ENCODE measurements at regions of chr1 and their contacts with region 1.

Region 1: DNA sequence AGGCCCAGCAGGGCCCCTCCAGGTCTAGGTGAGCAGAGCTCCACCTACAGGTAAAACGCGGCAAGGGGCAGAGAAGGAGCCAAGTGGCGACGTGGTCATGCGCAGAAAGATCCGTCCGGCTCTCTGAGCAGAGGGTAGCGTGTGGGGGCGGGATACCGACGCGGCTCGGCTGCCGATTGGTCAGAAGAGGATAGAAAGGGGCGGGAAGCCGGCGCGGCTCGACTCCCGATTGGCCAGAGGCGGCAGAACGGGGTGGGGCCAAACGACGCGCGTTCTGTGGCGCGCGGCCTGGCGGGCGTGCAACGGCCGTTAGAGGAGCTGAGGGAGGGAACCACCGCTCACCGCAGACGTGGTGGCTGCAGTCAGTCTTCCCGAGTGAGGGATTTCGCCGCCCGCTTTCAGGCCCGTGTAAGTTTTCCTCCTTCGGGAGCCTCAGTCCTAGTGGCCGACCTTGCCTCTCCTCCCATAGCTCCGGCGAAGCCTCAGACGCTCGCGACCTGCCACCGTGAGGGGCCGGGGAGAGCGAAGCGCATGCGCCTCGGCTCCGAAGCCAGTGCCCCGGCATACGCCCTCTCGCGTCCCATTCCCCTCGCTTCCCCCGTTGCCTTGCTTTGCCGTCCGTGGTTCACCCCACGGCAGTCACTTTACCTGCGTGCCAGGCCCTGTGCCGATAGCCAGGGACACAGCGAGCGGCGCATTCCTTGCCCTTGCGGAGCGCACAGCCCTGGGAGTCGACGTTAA is at the start of gene CEP85:
- DNase-seq: peak; percentile 93 to 99 (median 98)
- ATAC-seq: peak; percentile 96
- H3K4me3 ChIP-seq: peak within 1 kb of the TSS; percentile 91
- H3K4me3 Mint-ChIP-seq: peak within 1 kb of the TSS; percentile 89 to 99 (median 99)
- H3K27ac ChIP-seq: peak within 1 kb of the TSS; percentile 93
- H3K27ac Mint-ChIP-seq: peak within 1 kb of the TSS; percentile 87 to 99 (median 96)
- H3K4me1 ChIP-seq: peaks cover 4 to 13% of the 10 kb centered on the region in 2 donors
- H3K4me1 Mint-ChIP-seq: peaks cover 26 to 39% (median 38%) of the 10 kb centered on the region in 7 donors
- H3K27me3 ChIP-seq: no peaks in the 10 kb centered on the region
- H3K27me3 Mint-ChIP-seq: peaks cover 0 to 8% (median 0%) of the 10 kb centered on the region in 5 donors
- total RNA-seq, gene CEP85: 12.1 to 34.8 (median 20.7) TPM

Region 2: GRCh38 chr1:25568090-25568833 is 665.8 kb before region 1 on chr1:
- CTCF ChIA-PET with region 1: no interaction called
- POLR2A ChIA-PET with region 1: no interaction called
- intact Hi-C with region 1: no loop called
- DNase-seq: no peak
- ATAC-seq: no peak
- H3K4me3 ChIP-seq: no peak overlapping the region
- H3K4me3 Mint-ChIP-seq: peak overlapping the region in 9 of 10 donors; percentile 36 to 99 (median 74)
- H3K27ac ChIP-seq: peak overlapping the region; percentile 83
- H3K27ac Mint-ChIP-seq: peak overlapping the region in 8 of 9 donors; percentile 88 to 98 (median 94)
- H3K4me1 ChIP-seq: peaks cover 34 to 47% of the 10 kb centered on the region in 2 donors
- H3K4me1 Mint-ChIP-seq: peaks cover 34 to 83% (median 74%) of the 10 kb centered on the region in 7 donors
- H3K27me3 ChIP-seq: no peaks in the 10 kb centered on the region
- H3K27me3 Mint-ChIP-seq: no peaks in the 10 kb centered on the region

Region 3: GRCh38 chr1:26035959-26036755 is 197.9 kb before region 1 on chr1:
- CTCF ChIA-PET with region 1: interaction called, 4 read pairs
- POLR2A ChIA-PET with region 1: no interaction called
- intact Hi-C with region 1: loop called (anchors 1 to 10 kb)
- DNase-seq: peak; percentile 53 to 89 (median 73)
- ATAC-seq: peak; percentile 87
- H3K4me3 ChIP-seq: peak overlapping the region; percentile 99
- H3K4me3 Mint-ChIP-seq: peak overlapping the region; percentile 93 to 97 (median 96)
- H3K27ac ChIP-seq: peak overlapping the region; percentile 87
- H3K27ac Mint-ChIP-seq: peak overlapping the region; percentile 74 to 96 (median 90)
- H3K4me1 ChIP-seq: peaks cover 5 to 6% of the 10 kb centered on the region in 2 donors
- H3K4me1 Mint-ChIP-seq: peaks cover 0 to 15% (median 8%) of the 10 kb centered on the region in 7 donors
- H3K27me3 ChIP-seq: no peaks in the 10 kb centered on the region
- H3K27me3 Mint-ChIP-seq: peaks cover 0 to 19% (median 0%) of the 10 kb centered on the region in 5 donors

Region 4: DNA sequence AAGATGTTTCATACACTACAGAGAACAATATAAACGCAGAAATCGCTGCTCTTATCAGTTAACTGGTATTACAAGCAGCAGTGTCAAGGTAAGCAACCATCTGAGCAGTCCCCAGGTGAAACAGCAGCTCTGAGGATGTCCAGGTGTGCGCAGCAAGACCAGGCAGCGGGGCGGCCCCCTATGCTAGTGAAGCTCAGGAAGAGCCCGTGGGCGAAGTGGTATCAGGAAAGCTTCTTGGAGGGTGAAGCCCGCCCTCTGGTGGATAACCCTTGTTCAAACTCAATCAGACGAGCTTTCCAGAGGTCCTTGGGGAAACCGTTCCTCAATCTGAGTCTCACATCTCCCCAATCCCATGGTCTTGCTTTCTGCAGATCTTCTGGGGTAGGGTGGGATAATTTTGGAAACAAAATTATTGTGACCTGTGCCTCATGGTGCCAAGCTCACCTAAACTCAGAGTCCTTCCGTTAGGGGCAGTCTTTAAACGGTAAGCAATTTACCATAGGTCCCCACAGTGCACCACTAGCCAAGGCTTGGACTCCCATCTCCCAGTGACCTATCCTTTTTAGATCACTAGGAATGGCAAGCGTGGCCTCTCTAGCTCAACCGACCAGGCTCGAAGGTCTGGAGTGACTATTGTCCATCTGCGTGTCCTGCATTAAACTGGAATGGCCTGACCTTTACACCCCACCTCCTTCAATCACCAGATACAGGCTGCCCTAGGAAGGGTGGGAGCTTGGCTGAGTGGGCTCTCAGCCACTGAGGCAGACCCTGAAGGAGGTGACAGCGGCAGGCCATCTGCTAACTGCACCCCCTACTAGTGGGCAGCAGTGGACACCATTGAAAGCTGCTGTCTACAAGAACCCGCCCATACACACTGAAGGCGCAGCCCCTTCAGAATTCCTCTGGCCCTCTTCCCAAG is 88.8 kb before region 1 on chr1:
- CTCF ChIA-PET with region 1: interaction called, 19 read pairs
- POLR2A ChIA-PET with region 1: no interaction called
- intact Hi-C with region 1: no loop called
- DNase-seq: peak; percentile 52 to 77 (median 72)
- ATAC-seq: peak; percentile 99
- H3K4me3 ChIP-seq: no peak overlapping the region
- H3K4me3 Mint-ChIP-seq: peak overlapping the region in 5 of 10 donors; percentile 15 to 66 (median 37)
- H3K27ac ChIP-seq: no peak overlapping the region
- H3K27ac Mint-ChIP-seq: peak overlapping the region in 1 of 9 donors; percentile 19
- H3K4me1 ChIP-seq: no peaks in the 10 kb centered on the region
- H3K4me1 Mint-ChIP-seq: peaks cover 0 to 8% (median 4%) of the 10 kb centered on the region in 7 donors
- H3K27me3 ChIP-seq: no peaks in the 10 kb centered on the region
- H3K27me3 Mint-ChIP-seq: peaks cover 0 to 32% (median 0%) of the 10 kb centered on the region in 5 donors

Region 5: DNA sequence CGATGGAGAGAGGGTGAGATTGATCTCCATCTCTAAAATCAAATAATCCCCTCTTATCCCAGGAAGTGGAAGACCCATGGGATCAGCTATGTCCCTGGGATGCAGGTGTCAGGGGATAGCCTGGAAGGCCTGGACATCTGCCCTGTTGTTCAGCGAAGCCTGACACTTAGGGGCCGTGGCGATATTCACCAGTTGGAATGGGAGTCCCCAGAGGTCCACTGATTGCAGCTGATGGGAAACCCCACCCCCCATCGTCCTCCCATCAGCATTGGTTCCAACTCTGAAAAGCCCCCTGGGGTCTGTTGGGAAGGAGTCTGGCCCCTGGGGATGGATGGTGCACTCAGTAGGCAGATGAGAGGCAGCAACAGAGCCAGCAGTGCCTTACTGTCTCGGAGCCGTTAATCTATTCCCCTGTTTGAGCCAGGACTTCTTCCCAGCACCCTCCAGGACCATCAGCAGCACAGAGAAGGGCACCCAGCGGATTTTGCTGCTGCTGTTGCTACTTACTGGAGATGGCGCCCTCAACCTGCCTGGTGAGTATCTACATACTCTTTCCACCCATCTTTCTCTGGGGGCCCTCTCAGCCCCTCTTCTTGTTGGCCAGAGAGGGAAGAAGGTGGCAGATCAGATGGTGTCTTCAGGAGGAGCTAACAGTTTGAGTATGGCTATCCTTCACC is 30.3 kb before region 1 on chr1:
- CTCF ChIA-PET with region 1: interaction called, 5 read pairs
- POLR2A ChIA-PET with region 1: interaction called, 11 read pairs
- intact Hi-C with region 1: loop called in 1 of 2 experiments (anchors 2 kb)
- DNase-seq: no peak
- ATAC-seq: no peak
- H3K4me3 ChIP-seq: no peak overlapping the region
- H3K4me3 Mint-ChIP-seq: peak overlapping the region in 1 of 10 donors; percentile 90
- H3K27ac ChIP-seq: no peak overlapping the region
- H3K27ac Mint-ChIP-seq: peak overlapping the region in 7 of 9 donors; percentile 75 to 98 (median 89)
- H3K4me1 ChIP-seq: peaks cover 8 to 28% of the 10 kb centered on the region in 2 donors
- H3K4me1 Mint-ChIP-seq: peaks cover 21 to 54% (median 39%) of the 10 kb centered on the region in 7 donors
- H3K27me3 ChIP-seq: no peaks in the 10 kb centered on the region
- H3K27me3 Mint-ChIP-seq: peaks cover 0 to 2% (median 0%) of the 10 kb centered on the region in 5 donors

Region 6: GRCh38 chr1:26321315-26322041 is 87.4 kb after region 1 on chr1:
- CTCF ChIA-PET with region 1: interaction called, 4 read pairs
- POLR2A ChIA-PET with region 1: interaction called, 45 read pairs
- intact Hi-C with region 1: loop called in 1 of 2 experiments (anchors 1 kb)
- DNase-seq: peak; percentile 85 to 98 (median 92)
- ATAC-seq: peak; percentile 93
- H3K4me3 ChIP-seq: peak overlapping the region; percentile 98
- H3K4me3 Mint-ChIP-seq: peak overlapping the region; percentile 79 to 99 (median 94)
- H3K27ac ChIP-seq: peak overlapping the region; percentile 77
- H3K27ac Mint-ChIP-seq: peak overlapping the region; percentile 87 to 99 (median 96)
- H3K4me1 ChIP-seq: peaks cover 42 to 45% of the 10 kb centered on the region in 2 donors
- H3K4me1 Mint-ChIP-seq: peaks cover 40 to 70% (median 48%) of the 10 kb centered on the region in 7 donors
- H3K27me3 ChIP-seq: no peaks in the 10 kb centered on the region
- H3K27me3 Mint-ChIP-seq: no peaks in the 10 kb centered on the region

Region 7: DNA sequence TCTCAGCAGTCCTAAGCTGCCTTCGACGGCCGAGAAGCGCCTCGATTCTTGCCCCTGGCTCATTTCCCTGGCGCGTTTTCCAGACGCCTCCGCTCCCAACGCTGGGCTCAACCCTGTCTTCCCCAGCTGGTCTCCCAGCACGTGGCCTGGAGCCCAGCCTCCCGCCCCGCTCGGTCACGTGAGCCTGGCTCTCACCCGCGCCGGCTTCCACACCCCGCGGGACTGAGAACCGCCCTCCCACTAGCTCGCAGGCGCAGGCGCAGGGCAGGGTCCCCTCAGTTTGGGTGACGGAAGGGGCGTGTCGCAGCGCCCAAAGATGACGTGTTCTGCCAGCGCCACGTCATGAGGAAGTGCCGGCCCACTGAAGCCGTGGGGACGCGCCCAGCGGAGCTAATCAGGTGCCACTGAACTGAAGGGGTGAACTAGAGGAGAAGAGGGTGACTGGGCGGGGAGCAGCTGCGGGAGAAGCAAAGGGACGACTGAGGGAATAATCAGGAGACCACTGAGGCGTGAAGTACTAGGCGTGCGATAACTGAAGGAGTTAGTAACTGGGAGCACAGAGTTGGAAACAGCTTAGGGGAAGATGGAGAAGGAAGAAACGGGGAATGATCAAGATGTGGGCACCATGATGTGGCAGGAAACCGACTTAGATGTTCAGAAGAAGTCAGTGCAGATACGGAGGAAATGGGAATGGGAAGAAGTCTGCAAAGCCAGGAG is 198.1 kb after region 1 on chr1 and contains the start of gene DHDDS:
- CTCF ChIA-PET with region 1: no interaction called
- POLR2A ChIA-PET with region 1: interaction called, 6 read pairs
- intact Hi-C with region 1: loop called in 1 of 2 experiments (anchors 1 kb)
- DNase-seq: peak; percentile 95 to 98 (median 97)
- ATAC-seq: peak; percentile 99
- H3K4me3 ChIP-seq: peak within 1 kb of the TSS; percentile 88
- H3K4me3 Mint-ChIP-seq: peak within 1 kb of the TSS; percentile 92 to 99 (median 96)
- H3K27ac ChIP-seq: peak within 1 kb of the TSS; percentile 76
- H3K27ac Mint-ChIP-seq: peak within 1 kb of the TSS; percentile 90 to 99 (median 93)
- H3K4me1 ChIP-seq: peaks cover 11 to 15% of the 10 kb centered on the region in 2 donors
- H3K4me1 Mint-ChIP-seq: peaks cover 14 to 26% (median 22%) of the 10 kb centered on the region in 7 donors
- H3K27me3 ChIP-seq: no peaks in the 10 kb centered on the region
- H3K27me3 Mint-ChIP-seq: peaks cover 0 to 15% (median 0%) of the 10 kb centered on the region in 5 donors
- total RNA-seq, gene DHDDS: 28.1 to 58.9 (median 37.7) TPM

Measured in naive thymus-derived CD4-positive, alpha-beta T cell (primary cell).